Mucosa of descending colon (tissue), 3 donors: ENCODE measurements at regions of chr6 and their contacts with region 1.

Region 1: GRCh38 chr6:96897383-96898240 is at the start of gene NDUFAF4:
- DNase-seq: peak; percentile 98 to 99 (median 98)
- ATAC-seq: peak; percentile 99
- H3K4me3 ChIP-seq: peak within 1 kb of the TSS; percentile 86
- H3K4me1 ChIP-seq: peaks cover 11% of the 10 kb centered on the region
- CTCF ChIP-seq: peak; percentile 96
- total RNA-seq, gene NDUFAF4: 34.1 to 39.7 (median 37.0) TPM

Region 2: DNA sequence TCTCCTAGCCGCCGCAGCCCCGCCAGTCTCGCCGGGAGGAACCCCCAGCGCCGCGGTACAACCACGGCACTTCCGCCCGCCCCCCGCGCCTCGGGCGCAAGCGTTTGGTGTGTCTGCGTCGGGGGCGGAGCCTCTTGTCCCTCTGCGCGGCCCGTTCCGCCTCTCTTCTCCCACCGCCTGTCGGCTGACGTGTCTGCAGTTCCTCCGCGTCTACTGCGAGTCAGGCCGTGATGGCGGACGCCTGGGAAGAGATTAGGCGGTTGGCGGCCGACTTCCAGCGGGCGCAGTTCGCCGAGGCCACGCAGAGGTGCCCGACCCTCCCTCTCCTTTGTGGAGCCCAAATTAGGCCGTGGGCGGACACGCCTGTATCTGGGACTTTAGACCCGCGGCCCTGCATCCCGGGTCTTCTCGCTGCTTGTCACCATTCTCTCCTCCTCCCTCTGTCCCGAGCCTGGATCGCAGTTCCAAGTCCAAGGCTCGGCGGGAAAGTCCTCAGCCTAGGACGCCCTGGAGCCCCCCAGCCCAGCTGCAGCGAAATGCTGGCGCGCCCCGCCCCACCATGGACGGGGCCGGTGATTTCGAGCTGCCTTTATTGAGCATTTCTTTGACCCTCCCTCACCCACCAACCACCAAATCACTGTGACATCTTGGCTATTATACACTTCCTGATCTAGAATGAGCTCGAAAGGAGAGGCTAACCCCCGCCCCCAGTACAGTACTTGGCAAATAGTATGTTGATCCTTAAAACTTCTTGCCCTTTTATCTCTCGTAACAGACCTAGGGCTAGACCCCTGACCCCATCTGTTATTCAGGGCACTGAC is 375.8 kb before region 1 on chr6 and contains the start of gene UFL1:
- intact Hi-C with region 1: loop called in 1 of 2 experiments (anchors 10 kb)
- DNase-seq: peak; percentile 95 to 97 (median 95)
- ATAC-seq: peak; percentile 99
- H3K4me3 ChIP-seq: peak within 1 kb of the TSS; percentile 43
- H3K4me1 ChIP-seq: peaks cover 21% of the 10 kb centered on the region
- CTCF ChIP-seq: peak; percentile 6
- total RNA-seq, gene UFL1: 21.5 to 24.9 (median 24.3) TPM

Region 3: GRCh38 chr6:97053643-97054411 is 156.2 kb after region 1 on chr6:
- intact Hi-C with region 1: loop called in 1 of 2 experiments (anchors 5 kb)
- DNase-seq: no peak
- ATAC-seq: no peak
- H3K4me3 ChIP-seq: no peak overlapping the region
- H3K4me1 ChIP-seq: no peaks in the 10 kb centered on the region
- CTCF ChIP-seq: no peak